Colonic mucosa (tissue), 4 donors: ENCODE measurements at regions of chr1 and their contacts with region 1.

Region 1: GRCh38 chr1:43414634-43415223 is 25.0 kb downstream of the SZT2 start:
- DNase-seq: peak; percentile 71
- H3K4me3 ChIP-seq: no peak overlapping the region
- H3K27ac ChIP-seq: no peak overlapping the region
- H3K4me1 ChIP-seq: no peaks in the 10 kb centered on the region
- H3K27me3 ChIP-seq: no peaks in the 10 kb centered on the region
- CTCF ChIP-seq: peak; percentile 56

Region 2: DNA sequence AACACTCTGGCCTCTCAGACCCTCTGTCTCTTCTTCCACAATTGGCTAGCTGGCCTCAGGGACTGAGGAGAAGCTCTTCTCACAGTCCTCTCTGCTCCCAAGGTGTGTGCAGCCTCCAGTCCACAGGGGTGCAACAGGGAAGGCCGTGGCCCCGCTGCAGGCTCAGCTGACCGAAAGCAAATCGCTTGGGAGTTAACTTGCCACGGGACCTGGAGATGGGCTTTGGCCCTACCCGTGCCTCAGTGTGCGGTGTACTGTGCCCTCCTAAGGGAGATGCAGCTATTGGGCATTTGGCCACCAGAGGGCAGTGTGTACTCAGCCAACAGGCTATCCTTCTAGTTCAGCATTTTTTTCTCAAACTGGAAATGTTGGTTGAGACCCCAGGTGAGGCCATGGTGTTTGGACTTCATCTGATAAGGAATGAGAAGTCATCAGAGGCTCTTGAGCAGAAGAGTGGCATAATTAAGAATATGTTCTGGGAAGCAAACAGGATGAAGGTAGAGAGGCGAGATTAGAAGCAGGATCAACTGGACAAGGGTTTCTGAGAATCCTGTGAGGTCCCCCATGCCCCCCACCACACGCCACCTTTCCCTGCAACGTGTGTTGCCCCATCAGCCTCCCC is 187.5 kb before region 1 on chr1:
- intact Hi-C with region 1: loop called (anchors 5 kb)
- DNase-seq: peak; percentile 89
- H3K4me3 ChIP-seq: no peak overlapping the region
- H3K27ac ChIP-seq: no peak overlapping the region
- H3K4me1 ChIP-seq: no peaks in the 10 kb centered on the region
- H3K27me3 ChIP-seq: no peaks in the 10 kb centered on the region
- CTCF ChIP-seq: peak; percentile 95

Region 3: GRCh38 chr1:43776043-43776761 is 361.5 kb after region 1 on chr1:
- intact Hi-C with region 1: no loop called
- DNase-seq: no peak
- H3K4me3 ChIP-seq: no peak overlapping the region
- H3K27ac ChIP-seq: no peak overlapping the region
- H3K4me1 ChIP-seq: no peaks in the 10 kb centered on the region
- H3K27me3 ChIP-seq: no peaks in the 10 kb centered on the region
- CTCF ChIP-seq: no peak